AG04450 (cell line): ENCODE measurements at regions of chr10 and their contacts with region 1.

Region 1: DNA sequence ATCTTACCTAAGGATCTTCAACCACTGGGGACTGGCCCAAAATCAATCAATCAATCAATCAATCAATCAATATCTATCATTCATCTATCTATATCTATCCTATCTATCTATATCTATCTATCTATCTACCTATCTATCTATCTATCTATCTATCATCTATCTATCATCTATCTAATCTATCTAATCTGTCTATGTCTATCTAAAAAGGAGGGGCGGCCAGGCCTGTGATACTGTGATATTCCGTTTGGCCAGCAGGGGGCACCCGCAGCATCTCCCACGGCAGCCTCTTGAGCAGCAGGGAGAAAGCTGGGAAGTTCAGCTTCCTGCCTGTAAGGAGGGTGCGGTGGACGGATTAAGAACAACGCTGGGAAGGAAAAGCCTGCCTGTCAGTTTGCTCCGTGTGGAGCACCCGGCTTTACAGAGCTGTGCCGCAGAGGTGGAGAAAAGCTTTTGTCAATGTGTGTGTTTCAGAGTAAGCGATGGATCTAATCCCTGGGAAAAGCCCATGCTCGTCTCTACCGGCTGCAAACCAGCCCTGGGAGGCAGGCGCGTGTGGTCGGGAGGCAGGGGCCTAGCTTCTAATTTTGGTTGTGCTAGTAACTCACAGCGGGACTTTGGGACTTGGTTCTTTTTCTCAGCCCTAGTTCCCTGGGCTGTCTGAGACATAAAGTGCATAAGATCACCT is 125.0 kb downstream of the SH2D4B start:
- DNase-seq: peak; percentile 47
- H3K4me3 ChIP-seq: peak overlapping the region; percentile 41
- H3K27ac ChIP-seq: no peak overlapping the region
- H3K27me3 ChIP-seq: no peaks in the 10 kb centered on the region
- CTCF ChIP-seq: peak; percentile 84

Region 2: DNA sequence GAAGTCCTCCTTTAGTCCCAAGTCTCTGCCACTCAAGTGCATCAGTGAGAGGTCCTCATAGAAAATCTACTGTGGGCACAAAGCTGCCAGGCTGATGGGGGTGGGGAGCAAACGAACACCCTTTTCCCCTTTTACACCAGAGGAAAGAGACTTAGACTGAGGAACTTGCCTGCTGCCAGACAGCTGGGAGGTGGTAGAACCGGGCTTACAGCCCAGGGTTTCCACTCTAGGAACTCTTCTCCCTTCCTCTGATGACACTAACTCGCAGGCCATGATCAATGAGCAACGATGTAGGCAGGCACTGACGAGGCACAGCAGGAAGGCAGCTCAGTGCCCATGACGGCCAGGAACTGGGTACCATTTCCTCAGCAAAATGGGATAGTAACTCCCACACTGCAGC is 136.0 kb before region 1 on chr10:
- CTCF ChIA-PET with region 1: interaction called, 11 read pairs
- POLR2A ChIA-PET with region 1: no interaction called
- DNase-seq: no peak
- H3K4me3 ChIP-seq: no peak overlapping the region
- H3K27ac ChIP-seq: no peak overlapping the region
- H3K27me3 ChIP-seq: no peaks in the 10 kb centered on the region
- CTCF ChIP-seq: no peak

Region 3: GRCh38 chr10:80647173-80647811 is 15.4 kb before region 1 on chr10:
- CTCF ChIA-PET with region 1: interaction called, 67 read pairs
- POLR2A ChIA-PET with region 1: no interaction called
- DNase-seq: no peak
- H3K4me3 ChIP-seq: no peak overlapping the region
- H3K27ac ChIP-seq: no peak overlapping the region
- H3K27me3 ChIP-seq: no peaks in the 10 kb centered on the region
- CTCF ChIP-seq: no peak

Region 4: GRCh38 chr10:80684259-80684658 is 21.5 kb after region 1 on chr10:
- CTCF ChIA-PET with region 1: interaction called, 14 read pairs
- POLR2A ChIA-PET with region 1: no interaction called
- DNase-seq: no peak
- H3K4me3 ChIP-seq: no peak overlapping the region
- H3K27ac ChIP-seq: no peak overlapping the region
- H3K27me3 ChIP-seq: no peaks in the 10 kb centered on the region
- CTCF ChIP-seq: no peak

Region 5: DNA sequence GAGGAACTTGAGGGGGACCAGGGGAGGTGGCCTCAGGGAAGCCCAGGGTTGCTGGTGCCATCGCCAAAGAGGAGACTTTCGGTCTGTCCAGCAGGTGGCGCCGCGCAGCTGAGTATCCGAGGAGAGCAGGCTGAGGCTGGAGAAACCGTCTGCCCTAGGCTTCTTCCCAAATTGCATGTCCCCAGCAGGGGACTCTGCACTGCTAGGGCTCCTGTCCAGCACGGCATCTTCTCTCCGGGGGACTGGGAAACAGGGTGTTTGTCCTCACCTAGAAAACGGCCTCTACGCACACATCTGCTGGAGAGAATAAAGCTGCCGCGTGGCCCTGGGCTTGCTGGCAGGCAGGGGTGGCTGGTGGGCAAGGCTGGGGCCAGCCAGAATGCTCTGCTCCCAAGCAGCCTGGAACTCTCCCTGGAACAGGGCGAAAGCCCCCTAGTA is 36.9 kb after region 1 on chr10:
- CTCF ChIA-PET with region 1: interaction called, 13 read pairs
- POLR2A ChIA-PET with region 1: interaction called, 3 read pairs
- DNase-seq: peak; percentile 20
- H3K4me3 ChIP-seq: no peak overlapping the region
- H3K27ac ChIP-seq: no peak overlapping the region
- H3K27me3 ChIP-seq: peaks cover 2% of the 10 kb centered on the region
- CTCF ChIP-seq: peak; percentile 82

Region 6: GRCh38 chr10:80805343-80806020 is 142.8 kb after region 1 on chr10:
- CTCF ChIA-PET with region 1: no interaction called
- POLR2A ChIA-PET with region 1: no interaction called
- DNase-seq: no peak
- H3K4me3 ChIP-seq: no peak overlapping the region
- H3K27ac ChIP-seq: no peak overlapping the region
- H3K27me3 ChIP-seq: no peaks in the 10 kb centered on the region
- CTCF ChIP-seq: no peak